ENCODE measurements at regions of chr3 and their contacts with region 1.

Region 1: GRCh38 chr3:177816667-177817208 is 619.5 kb upstream of the TBL1XR1 start:
- DNase-seq: peak; percentile 62
- H3K4me3 ChIP-seq: no peak overlapping the region
- H3K27ac ChIP-seq: no peak overlapping the region
- H3K4me1 ChIP-seq: peaks cover 18% of the 10 kb centered on the region
- H3K27me3 ChIP-seq: no peaks in the 10 kb centered on the region
- CTCF ChIP-seq: no peak
- POLR2A ChIP-seq: no peak

Region 2: GRCh38 chr3:178078953-178079352 is 262.2 kb after region 1 on chr3:
- CTCF ChIA-PET with region 1: no interaction called
- POLR2A ChIA-PET with region 1: no interaction called
- dilution Hi-C with region 1: no loop called
- intact Hi-C with region 1: loop called (anchors 10 kb)
- DNase-seq: peak; percentile 99
- H3K4me3 ChIP-seq: no peak overlapping the region
- H3K27ac ChIP-seq: peak overlapping the region; percentile 81
- H3K4me1 ChIP-seq: peaks cover 26% of the 10 kb centered on the region
- H3K27me3 ChIP-seq: no peaks in the 10 kb centered on the region
- CTCF ChIP-seq: no peak
- POLR2A ChIP-seq: no peak